ENCODE measurements at regions of chr2 and their contacts with region 1.

Region 1: GRCh38 chr2:99940963-99941362 is 201.4 kb downstream of the AFF3 start:
- DNase-seq: peak; percentile 30
- H3K4me3 Mint-ChIP-seq: no peak overlapping the region
- H3K27ac Mint-ChIP-seq: no peak overlapping the region
- H3K4me1 Mint-ChIP-seq: no peaks in the 10 kb centered on the region
- H3K27me3 Mint-ChIP-seq: no peaks in the 10 kb centered on the region
- CTCF ChIP-seq: no peak

Region 2: GRCh38 chr2:99863236-99863902 is 77.6 kb before region 1 on chr2:
- CTCF ChIA-PET with region 1: no interaction called
- POLR2A ChIA-PET with region 1: no interaction called
- intact Hi-C with region 1: loop called (anchors 2 kb)
- DNase-seq: peak; percentile 33
- H3K4me3 Mint-ChIP-seq: no peak overlapping the region
- H3K27ac Mint-ChIP-seq: no peak overlapping the region
- H3K4me1 Mint-ChIP-seq: peaks cover 25% of the 10 kb centered on the region
- H3K27me3 Mint-ChIP-seq: no peaks in the 10 kb centered on the region
- CTCF ChIP-seq: no peak

Region 3: GRCh38 chr2:99911736-99912135 is 29.2 kb before region 1 on chr2:
- CTCF ChIA-PET with region 1: no interaction called
- POLR2A ChIA-PET with region 1: no interaction called
- intact Hi-C with region 1: no loop called
- DNase-seq: no peak
- H3K4me3 Mint-ChIP-seq: no peak overlapping the region
- H3K27ac Mint-ChIP-seq: no peak overlapping the region
- H3K4me1 Mint-ChIP-seq: no peaks in the 10 kb centered on the region
- H3K27me3 Mint-ChIP-seq: no peaks in the 10 kb centered on the region
- CTCF ChIP-seq: no peak

Region 4: GRCh38 chr2:99926986-99927385 is 14.0 kb before region 1 on chr2:
- CTCF ChIA-PET with region 1: interaction called, 3 read pairs
- POLR2A ChIA-PET with region 1: no interaction called
- intact Hi-C with region 1: loop called (anchors 1 kb)
- DNase-seq: no peak
- H3K4me3 Mint-ChIP-seq: no peak overlapping the region
- H3K27ac Mint-ChIP-seq: no peak overlapping the region
- H3K4me1 Mint-ChIP-seq: no peaks in the 10 kb centered on the region
- H3K27me3 Mint-ChIP-seq: no peaks in the 10 kb centered on the region
- CTCF ChIP-seq: no peak

Measured in MCF 10A (cell line).